Mammary epithelial cell (primary cell): ENCODE measurements at regions of chr12 and their contacts with region 1.

Region 1: GRCh38 chr12:6335451-6336078 is 6.3 kb downstream of the TNFRSF1A start:
- DNase-seq: peak; percentile 84
- H3K4me3 ChIP-seq: peak overlapping the region in 2 of 3 experiments; percentile 17 to 28
- H3K27ac ChIP-seq: peak overlapping the region; percentile 88
- H3K4me1 ChIP-seq: peaks cover 87% of the 10 kb centered on the region
- H3K27me3 ChIP-seq: no peaks in the 10 kb centered on the region
- CTCF ChIP-seq: peak; percentile 26 to 72

Region 2: GRCh38 chr12:6073426-6073825 is 262.1 kb before region 1 on chr12:
- CTCF ChIA-PET with region 1: interaction called, 10 read pairs
- dilution Hi-C with region 1: no loop called
- in situ Hi-C with region 1: no loop called
- intact Hi-C with region 1: no loop called
- DNase-seq: no peak
- H3K4me3 ChIP-seq: no peak overlapping the region
- H3K27ac ChIP-seq: no peak overlapping the region
- H3K4me1 ChIP-seq: peaks cover 12% of the 10 kb centered on the region
- H3K27me3 ChIP-seq: no peaks in the 10 kb centered on the region
- CTCF ChIP-seq: no peak

Region 3: DNA sequence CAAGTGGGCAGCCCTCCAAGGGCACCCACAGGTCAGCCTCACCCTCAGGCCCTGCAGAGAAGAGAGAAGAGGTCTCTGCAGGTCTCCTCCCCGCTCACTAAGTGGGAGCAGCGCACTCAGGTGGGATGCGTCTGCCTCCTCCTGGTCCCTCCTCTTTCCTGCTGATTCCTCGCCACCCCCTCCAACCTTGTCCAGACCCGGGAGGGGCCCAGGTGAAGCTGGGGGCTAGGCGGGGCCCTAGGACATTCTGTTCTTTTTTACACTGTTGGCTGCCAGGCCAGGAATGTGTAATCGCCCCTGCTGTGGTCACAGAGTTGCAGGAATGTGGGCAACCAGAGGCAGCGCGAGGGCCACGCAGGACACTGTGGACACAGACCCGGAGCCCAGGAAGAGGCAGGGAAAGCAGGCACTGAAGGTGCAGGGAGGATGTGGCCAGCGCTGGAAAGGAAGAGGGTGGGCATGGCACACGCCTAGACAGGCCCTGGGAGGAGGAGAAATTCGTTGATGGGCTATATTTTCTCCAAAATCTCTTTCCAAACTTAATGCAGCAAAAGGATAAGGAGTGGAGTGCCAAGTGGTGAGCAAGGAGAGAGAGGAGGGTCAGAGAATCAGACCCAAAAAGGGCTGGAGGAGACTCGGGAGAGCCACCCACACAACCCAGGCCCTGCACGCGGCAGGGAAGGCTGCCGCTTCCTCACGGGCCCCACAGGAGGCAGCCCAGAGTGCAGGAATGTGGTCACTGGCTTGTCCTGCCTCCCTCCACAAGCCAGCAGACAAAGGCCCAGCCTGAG is 40.7 kb after region 1 on chr12:
- CTCF ChIA-PET with region 1: interaction called, 43 read pairs
- dilution Hi-C with region 1: no loop called
- in situ Hi-C with region 1: loop called in 1 of 2 experiments (anchors 5 kb)
- intact Hi-C with region 1: loop called (anchors 1 kb)
- DNase-seq: peak; percentile 90
- H3K4me3 ChIP-seq: peak overlapping the region; percentile 64 to 90 (median 87)
- H3K27ac ChIP-seq: peak overlapping the region; percentile 92
- H3K4me1 ChIP-seq: peaks cover 41% of the 10 kb centered on the region
- H3K27me3 ChIP-seq: no peaks in the 10 kb centered on the region
- CTCF ChIP-seq: peak; percentile 29 to 64

Region 4: DNA sequence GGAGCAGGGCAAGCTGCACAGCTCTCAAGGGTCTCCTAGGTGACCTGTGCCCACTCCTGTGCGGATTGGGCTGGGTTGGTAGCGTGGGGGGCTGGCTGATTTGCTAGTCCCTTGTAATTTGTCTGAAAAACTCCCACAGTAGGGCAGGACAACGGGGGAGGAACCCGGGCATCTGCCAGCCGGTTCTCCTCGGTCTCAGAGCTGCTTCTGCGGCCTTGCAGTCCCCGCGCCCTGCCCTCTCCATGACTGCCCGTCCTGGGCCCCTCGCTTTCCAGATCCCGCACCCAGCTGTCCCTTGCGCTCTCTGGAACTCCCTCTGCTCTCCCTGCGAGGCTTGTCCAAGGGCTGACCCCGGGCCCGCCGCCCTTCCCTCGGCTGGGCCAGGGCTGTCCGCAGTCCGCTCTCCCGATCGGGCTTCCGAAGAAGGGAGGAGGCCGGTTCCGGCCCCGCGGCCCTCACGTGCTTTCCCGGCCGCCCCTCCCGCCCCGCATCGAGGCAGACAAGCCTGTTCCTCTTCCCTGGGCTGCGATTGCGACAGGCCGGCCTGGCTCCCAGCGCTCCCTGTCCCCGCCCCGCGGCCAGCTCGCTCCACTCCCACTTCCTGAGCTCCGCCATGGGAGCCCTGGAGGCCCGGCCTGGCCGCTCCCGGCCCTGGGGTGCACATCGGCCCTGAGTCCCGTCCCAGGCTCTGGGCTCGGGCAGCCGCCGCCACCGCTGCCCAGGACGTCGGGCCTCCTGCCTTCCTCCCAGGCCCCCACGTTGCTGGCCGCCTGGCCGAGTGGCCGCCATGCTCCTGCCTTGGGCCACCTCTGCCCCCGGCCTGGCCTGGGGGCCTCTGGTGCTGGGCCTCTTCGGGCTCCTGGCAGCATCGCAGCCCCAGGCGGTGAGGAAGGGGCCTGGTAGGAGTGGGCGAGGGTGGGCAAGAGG is 48.3 kb after region 1 on chr12 and contains the start of gene LTBR:
- CTCF ChIA-PET with region 1: no interaction called
- dilution Hi-C with region 1: no loop called
- in situ Hi-C with region 1: no loop called
- intact Hi-C with region 1: loop called (anchors 1 kb)
- DNase-seq: peak; percentile 90
- H3K4me3 ChIP-seq: peak within 1 kb of the TSS; percentile 77 to 89 (median 85)
- H3K27ac ChIP-seq: peak within 1 kb of the TSS; percentile 80
- H3K4me1 ChIP-seq: peaks cover 36% of the 10 kb centered on the region
- H3K27me3 ChIP-seq: no peaks in the 10 kb centered on the region
- CTCF ChIP-seq: peak in 1 of 2 donors; percentile 10
- total RNA-seq, gene LTBR: 134 to 149 TPM

Region 5: DNA sequence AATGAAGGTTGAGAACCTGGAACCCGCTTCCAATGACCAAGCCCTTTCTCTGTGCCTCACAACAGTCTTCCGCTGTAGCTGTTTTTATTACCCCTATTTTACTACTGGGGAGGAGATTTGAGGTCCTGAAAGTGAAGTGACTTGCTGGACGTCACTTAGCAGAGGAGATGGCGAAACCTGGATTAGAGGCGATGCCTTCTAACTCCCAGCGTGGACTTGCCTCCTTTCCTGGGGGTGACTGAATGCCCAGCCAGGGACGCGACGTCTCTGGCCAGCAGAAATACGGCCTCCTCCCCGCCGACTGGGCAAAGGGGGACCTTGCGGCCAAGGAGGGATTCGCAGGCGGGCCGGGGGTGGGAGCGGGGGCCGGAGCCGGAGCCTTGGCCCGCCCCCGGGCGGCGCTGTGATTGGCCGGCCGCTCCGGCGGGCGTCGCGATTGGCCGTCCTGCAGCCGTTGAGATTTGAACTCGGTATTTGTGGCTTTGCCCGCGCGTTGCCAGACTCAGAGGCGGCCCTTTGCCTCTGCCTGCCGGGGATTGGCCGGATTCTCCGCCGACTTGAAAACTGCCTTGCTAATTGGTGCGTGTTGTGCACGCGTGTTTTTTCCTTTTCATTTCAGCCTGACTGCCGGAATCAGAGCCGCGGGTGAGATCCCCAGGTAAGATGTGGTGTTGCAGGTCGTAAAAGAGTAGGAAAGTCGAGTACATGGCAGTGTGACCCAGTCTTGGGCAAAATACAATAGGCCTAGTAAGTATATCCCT is 158.1 kb after region 1 on chr12 and contains the start of gene NCAPD2:
- CTCF ChIA-PET with region 1: interaction called, 13 read pairs
- dilution Hi-C with region 1: no loop called
- in situ Hi-C with region 1: no loop called
- intact Hi-C with region 1: no loop called
- DNase-seq: peak; percentile 97
- H3K4me3 ChIP-seq: peak within 1 kb of the TSS; percentile 90 to 95 (median 94)
- H3K27ac ChIP-seq: peak within 1 kb of the TSS; percentile 93
- H3K4me1 ChIP-seq: peaks cover 27% of the 10 kb centered on the region
- H3K27me3 ChIP-seq: no peaks in the 10 kb centered on the region
- CTCF ChIP-seq: peak; percentile 7 to 12
- total RNA-seq, gene NCAPD2: 17.8 to 53.7 TPM

Region 6: DNA sequence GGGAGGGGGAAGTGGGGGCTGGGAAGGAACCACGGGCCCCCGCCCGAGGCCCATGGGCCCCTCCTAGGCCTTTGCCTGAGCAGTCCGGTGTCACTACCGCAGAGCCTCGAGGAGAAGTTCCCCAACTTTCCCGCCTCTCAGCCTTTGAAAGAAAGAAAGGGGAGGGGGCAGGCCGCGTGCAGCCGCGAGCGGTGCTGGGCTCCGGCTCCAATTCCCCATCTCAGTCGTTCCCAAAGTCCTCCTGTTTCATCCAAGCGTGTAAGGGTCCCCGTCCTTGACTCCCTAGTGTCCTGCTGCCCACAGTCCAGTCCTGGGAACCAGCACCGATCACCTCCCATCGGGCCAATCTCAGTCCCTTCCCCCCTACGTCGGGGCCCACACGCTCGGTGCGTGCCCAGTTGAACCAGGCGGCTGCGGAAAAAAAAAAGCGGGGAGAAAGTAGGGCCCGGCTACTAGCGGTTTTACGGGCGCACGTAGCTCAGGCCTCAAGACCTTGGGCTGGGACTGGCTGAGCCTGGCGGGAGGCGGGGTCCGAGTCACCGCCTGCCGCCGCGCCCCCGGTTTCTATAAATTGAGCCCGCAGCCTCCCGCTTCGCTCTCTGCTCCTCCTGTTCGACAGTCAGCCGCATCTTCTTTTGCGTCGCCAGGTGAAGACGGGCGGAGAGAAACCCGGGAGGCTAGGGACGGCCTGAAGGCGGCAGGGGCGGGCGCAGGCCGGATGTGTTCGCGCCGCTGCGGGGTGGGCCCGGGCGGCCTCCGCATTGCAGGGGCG is 198.5 kb after region 1 on chr12 and contains the start of gene GAPDH:
- CTCF ChIA-PET with region 1: no interaction called
- dilution Hi-C with region 1: no loop called
- in situ Hi-C with region 1: no loop called
- intact Hi-C with region 1: loop called (anchors 2 kb)
- DNase-seq: peak; percentile 97
- H3K4me3 ChIP-seq: peak within 1 kb of the TSS; percentile 64 to 92 (median 91)
- H3K27ac ChIP-seq: peak within 1 kb of the TSS; percentile 91
- H3K4me1 ChIP-seq: peaks cover 47% of the 10 kb centered on the region
- H3K27me3 ChIP-seq: no peaks in the 10 kb centered on the region
- CTCF ChIP-seq: no peak
- total RNA-seq, gene GAPDH: 6,493 to 13,434 TPM